Ovary (tissue), 10 donors: ENCODE measurements at regions of chr2 and their contacts with region 1.

Region 1: GRCh38 chr2:86512034-86512433 is 51.2 kb downstream of the CHMP3 start:
- DNase-seq: no peak
- H3K4me3 ChIP-seq: no peak overlapping the region
- H3K27ac ChIP-seq: no peak overlapping the region
- H3K4me1 ChIP-seq: no peaks in the 10 kb centered on the region
- H3K27me3 ChIP-seq: no peaks in the 10 kb centered on the region
- CTCF ChIP-seq: no peak
- EP300 ChIP-seq: no peak
- POLR2A ChIP-seq: no peak

Region 2: DNA sequence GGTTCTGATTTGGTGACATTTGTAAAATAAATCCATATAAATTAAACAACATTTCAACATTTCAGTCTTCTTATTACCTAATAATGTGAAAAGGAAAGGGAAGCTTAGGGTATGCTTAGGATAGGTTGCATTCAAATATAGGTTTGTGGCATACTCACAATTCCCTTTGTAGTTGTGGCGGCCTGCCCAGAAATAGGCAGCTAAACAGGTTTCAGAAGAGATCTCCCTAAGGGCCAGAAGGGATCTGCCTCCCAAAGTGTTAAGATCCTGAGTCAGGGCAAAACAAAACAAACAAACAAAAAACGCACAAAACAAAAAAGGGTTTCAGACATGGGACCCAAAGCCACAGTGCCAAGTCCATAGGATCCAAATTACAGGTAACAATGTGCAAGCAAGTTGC is 1420.2 kb before region 1 on chr2:
- intact Hi-C with region 1: loop called in 1 of 4 experiments (anchors 5 kb)
- DNase-seq: no peak
- H3K4me3 ChIP-seq: no peak overlapping the region
- H3K27ac ChIP-seq: no peak overlapping the region
- H3K4me1 ChIP-seq: no peaks in the 10 kb centered on the region
- H3K27me3 ChIP-seq: no peaks in the 10 kb centered on the region
- CTCF ChIP-seq: no peak
- EP300 ChIP-seq: no peak
- POLR2A ChIP-seq: no peak